Common myeloid progenitor, CD34-positive (primary cell): ENCODE measurements at regions of chr13 and their contacts with region 1.

Region 1: DNA sequence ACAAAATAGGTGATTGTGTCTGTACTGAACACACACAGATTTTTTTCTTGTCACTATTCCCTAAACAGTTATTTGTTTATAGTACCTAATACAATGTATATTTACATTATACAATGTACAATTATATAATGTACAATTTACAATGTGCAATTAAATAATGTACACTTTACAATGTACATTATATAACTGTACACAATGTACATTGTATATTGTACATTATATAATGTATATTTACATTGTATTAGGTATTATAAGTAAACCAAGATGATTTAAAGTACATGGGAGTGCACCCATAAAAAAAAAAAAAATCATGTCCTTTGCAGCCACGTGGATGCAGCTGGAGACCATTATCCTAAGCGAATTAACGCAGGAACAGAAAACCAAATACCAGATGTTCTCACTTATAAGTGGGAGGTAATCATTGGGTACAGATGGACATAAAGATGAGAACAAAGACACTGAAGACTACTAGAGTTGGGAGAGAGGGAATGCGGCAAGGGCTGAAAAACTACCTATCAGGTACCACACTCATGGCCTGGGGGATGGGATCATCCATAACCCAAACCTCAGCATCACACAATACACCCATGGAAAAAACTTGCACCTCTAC is 68.1 kb downstream of the ABCC4 start:
- DNase-seq: no peak
- H3K4me3 ChIP-seq: no peak overlapping the region
- H3K27ac ChIP-seq: no peak overlapping the region
- H3K4me1 ChIP-seq: peaks cover 0 to 24% (median 9%) of the 10 kb centered on the region in 4 experiments
- H3K27me3 ChIP-seq: no peaks in the 10 kb centered on the region

Region 2: GRCh38 chr13:95246292-95247082 is 13.4 kb after region 1 on chr13:
- CTCF ChIA-PET with region 1: interaction called, 15 read pairs
- POLR2A ChIA-PET with region 1: no interaction called
- DNase-seq: peak; percentile 76 to 91 (median 89)
- H3K4me3 ChIP-seq: peak overlapping the region in 3 of 7 experiments; percentile 6 to 46 (median 9)
- H3K27ac ChIP-seq: no peak overlapping the region
- H3K4me1 ChIP-seq: peaks cover 14 to 69% (median 57%) of the 10 kb centered on the region in 4 experiments
- H3K27me3 ChIP-seq: no peaks in the 10 kb centered on the region